IMR-90 (cell line): ENCODE measurements at regions of chr22 and their contacts with region 1.

Region 1: DNA sequence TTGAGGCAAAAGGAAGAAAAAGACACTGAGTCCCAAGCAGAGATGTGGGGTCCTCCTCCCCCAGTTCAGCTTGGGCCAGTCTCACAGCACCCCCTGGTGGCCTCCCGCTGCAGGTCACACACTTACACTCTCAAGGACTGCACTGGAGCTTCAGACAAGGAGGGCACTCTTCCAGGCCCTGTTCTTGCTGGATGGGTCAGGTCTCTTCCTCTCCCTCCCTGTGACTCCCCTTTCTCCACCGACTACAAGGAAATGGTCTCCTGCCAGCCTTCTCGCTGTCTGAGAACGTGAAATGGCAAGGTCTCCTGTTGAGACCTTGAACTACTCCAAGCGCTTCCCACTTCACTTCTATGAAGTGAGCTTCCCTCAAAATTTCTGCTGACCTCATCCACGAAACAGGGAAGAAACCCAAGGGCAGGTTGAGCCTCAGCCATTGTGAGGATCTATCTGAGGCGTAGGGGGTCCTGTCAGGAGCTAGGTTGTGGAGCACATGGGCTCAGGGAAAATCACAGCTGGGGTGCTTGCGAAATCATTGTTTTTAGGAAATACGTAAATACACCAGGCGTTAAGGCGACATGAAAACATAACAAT is 11.2 kb upstream of the IGLL1 start:
- DNase-seq: peak; percentile 54
- ATAC-seq: peak; percentile 99
- H3K4me3 ChIP-seq: no peak overlapping the region
- H3K27ac ChIP-seq: no peak overlapping the region
- H3K4me1 ChIP-seq: no peaks in the 10 kb centered on the region; the same call in 1 of the 2 replicates
- H3K27me3 ChIP-seq: peaks cover 2% of the 10 kb centered on the region
- CTCF ChIP-seq: peak; percentile 73
- POLR2A ChIP-seq: no peak
- RAD21 ChIP-seq: peak; percentile 84

Region 2: DNA sequence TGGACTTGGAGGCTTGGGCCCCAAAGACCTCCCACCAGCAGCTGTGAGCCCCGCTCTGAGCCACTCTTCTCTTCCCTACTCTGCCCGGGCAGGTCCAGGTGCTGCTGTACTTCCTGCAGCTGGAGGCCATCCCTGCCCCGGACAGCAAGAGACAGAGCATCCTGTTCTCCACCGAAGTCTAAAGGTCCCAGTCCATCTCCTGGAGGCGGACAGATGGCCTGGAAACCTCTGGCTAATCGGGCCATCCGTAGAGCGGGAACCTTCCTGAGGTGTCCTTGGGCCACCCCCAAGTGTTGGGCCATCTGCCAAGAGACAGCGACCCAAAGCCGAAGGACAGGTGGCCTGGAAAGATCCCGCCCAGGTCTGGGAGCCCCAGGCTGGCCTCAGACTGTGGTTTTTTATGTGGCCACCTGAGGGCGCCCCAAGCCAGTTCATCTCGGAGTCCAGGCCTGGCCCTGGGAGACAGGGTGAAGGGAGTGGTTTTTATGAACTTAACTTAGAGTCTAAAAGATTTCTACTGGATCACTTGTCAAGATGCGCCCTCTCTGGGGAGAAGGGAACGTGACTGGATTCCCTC is 275.9 kb before region 1 on chr22:
- CTCF ChIA-PET with region 1: no interaction called
- POLR2A ChIA-PET with region 1: no interaction called
- dilution Hi-C with region 1: no loop called
- in situ Hi-C with region 1: no loop called
- intact Hi-C with region 1: loop called (anchors 1 kb)
- DNase-seq: peak; percentile 86
- ATAC-seq: peak; percentile 74
- H3K4me3 ChIP-seq: no peak overlapping the region
- H3K27ac ChIP-seq: no peak overlapping the region
- H3K4me1 ChIP-seq: peaks cover 4% of the 10 kb centered on the region; the same call in 1 of the 2 replicates
- H3K27me3 ChIP-seq: no peaks in the 10 kb centered on the region
- CTCF ChIP-seq: peak; percentile 76
- POLR2A ChIP-seq: no peak
- RAD21 ChIP-seq: peak; percentile 82

Region 3: DNA sequence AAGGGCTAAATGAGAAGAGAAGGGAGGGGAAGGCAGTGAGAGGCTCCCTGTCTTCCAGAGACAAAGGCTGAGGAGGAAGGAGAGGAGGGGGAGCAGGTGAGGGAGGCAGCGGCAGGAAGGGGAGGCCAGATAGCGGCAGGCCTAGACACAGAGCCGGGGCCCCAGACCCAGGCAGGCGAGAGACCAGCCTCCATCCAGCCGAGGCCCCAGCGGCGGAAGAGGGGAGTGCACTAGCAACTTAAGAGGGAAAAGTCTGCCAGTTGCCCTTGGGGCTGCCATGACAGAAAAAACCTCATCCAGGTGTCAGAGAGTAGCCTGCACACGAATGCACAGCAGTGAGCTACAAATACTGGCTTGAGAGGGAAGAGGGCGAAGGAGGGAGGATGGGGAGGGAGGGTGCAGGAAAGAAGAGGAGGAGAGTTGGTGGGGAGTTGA is 58.0 kb before region 1 on chr22:
- CTCF ChIA-PET with region 1: no interaction called
- POLR2A ChIA-PET with region 1: no interaction called
- dilution Hi-C with region 1: no loop called
- in situ Hi-C with region 1: no loop called
- intact Hi-C with region 1: no loop called
- DNase-seq: peak; percentile 10
- ATAC-seq: peak; percentile 93
- H3K4me3 ChIP-seq: no peak overlapping the region
- H3K27ac ChIP-seq: no peak overlapping the region
- H3K4me1 ChIP-seq: no peaks in the 10 kb centered on the region
- H3K27me3 ChIP-seq: peaks cover 38% of the 10 kb centered on the region
- CTCF ChIP-seq: peak; percentile 29
- POLR2A ChIP-seq: no peak
- RAD21 ChIP-seq: no peak

Region 4: GRCh38 chr22:23692598-23693291 is 101.4 kb after region 1 on chr22:
- CTCF ChIA-PET with region 1: no interaction called
- POLR2A ChIA-PET with region 1: no interaction called
- dilution Hi-C with region 1: no loop called
- in situ Hi-C with region 1: no loop called
- intact Hi-C with region 1: no loop called
- DNase-seq: no peak
- ATAC-seq: no peak
- H3K4me3 ChIP-seq: no peak overlapping the region
- H3K27ac ChIP-seq: no peak overlapping the region
- H3K4me1 ChIP-seq: 0 out of 2 replicates have a peak, but pooled peaks cover 3% of the 10 kb centered on the region
- H3K27me3 ChIP-seq: no peaks in the 10 kb centered on the region
- CTCF ChIP-seq: no peak
- POLR2A ChIP-seq: no peak
- RAD21 ChIP-seq: no peak